Psoas muscle (tissue), 8 donors: ENCODE measurements at regions of chr22 and their contacts with region 1.

Region 1: DNA sequence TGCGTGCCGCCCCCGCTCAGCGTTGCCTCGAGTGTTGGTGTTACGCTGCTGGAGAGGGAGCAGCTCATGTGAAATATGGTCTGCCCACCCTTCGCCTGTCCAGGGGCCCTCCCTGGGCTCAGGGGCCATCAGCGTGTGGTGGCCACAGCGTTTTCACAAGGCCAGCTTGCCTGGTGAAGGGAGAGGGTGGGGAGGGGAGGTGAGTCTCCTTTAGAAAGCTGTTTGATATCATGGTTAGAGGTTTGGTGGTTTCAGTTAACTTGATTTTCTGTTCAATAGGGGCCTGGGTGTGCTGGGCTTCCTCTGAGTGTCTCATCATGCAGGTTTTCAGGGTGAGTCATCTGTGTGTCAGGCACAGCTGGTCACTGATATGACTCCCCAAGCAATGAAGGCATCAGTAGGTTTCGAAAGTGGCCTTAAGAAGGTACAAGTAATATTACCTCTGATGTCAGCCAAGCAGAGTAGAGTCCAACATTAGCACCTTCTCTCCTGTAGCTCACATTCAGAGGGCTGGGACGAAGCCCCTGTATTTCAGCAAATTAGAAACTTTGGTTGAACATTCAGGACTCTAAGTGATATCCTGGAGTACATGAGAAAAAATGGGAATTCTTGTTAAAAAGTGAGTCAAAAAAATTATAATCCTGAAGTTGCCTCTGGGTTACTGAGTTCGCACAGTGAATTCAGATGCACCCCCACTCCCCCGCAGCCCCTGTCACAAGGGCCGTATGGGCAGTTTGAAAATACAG is 172.5 kb downstream of the TBC1D22A start:
- DNase-seq: peak in 1 of 2 donors; percentile 44
- ATAC-seq: peak; percentile 81 to 89 (median 84)
- H3K4me3 ChIP-seq: no peak overlapping the region
- H3K27ac ChIP-seq: peak overlapping the region; percentile 41
- H3K4me1 ChIP-seq: peaks cover 23% of the 10 kb centered on the region
- H3K27me3 ChIP-seq: no peaks in the 10 kb centered on the region
- CTCF ChIP-seq: no peak

Region 2: DNA sequence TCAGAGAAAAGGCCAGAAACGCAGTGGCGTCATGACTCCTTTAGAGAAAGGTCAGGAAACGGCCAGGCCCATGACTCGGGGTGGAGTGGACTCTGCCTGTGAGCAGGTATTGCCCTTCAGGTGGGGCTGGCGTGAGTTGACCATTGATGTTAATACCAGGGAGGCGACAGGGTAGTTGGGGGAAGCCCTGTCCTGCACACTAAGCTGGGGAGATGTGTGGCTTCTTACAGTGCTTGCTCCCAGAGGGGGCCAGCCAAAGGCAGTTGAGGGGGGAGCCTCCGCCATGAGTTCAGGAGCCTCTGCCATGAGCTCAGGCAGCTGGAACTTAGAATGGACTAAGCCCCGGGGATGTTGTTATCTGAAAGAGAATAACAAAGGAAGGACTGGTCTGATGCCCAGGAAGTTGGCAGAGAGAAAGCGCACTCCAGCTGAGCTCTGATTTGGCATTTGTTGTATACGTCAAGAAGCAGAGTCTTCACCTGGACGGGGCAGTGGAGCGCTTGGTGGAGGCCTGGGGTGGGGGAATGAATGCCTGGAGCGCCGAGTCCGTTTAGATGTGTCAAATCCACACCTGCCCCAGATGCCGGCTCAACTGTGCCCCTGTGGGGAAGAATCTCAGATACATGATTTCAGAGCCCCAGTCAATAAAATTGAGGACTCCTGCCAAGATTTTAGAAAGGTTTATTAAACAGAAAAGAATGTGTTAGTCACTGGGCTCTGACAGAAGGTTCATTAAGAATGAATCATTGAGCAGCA is 50.0 kb after region 1 on chr22:
- intact Hi-C with region 1: loop called in 1 of 2 experiments (anchors 5 kb)
- DNase-seq: no peak
- ATAC-seq: no peak
- H3K4me3 ChIP-seq: no peak overlapping the region
- H3K27ac ChIP-seq: no peak overlapping the region
- H3K4me1 ChIP-seq: no peaks in the 10 kb centered on the region
- H3K27me3 ChIP-seq: no peaks in the 10 kb centered on the region
- CTCF ChIP-seq: no peak

Region 3: GRCh38 chr22:47053726-47054141 is 118.8 kb after region 1 on chr22:
- intact Hi-C with region 1: no loop called
- DNase-seq: no peak
- ATAC-seq: no peak
- H3K4me3 ChIP-seq: no peak overlapping the region
- H3K27ac ChIP-seq: no peak overlapping the region
- H3K4me1 ChIP-seq: no peaks in the 10 kb centered on the region
- H3K27me3 ChIP-seq: no peaks in the 10 kb centered on the region
- CTCF ChIP-seq: no peak